HCT116 (cell line): ENCODE measurements at regions of chr15 and their contacts with region 1.

Region 1: GRCh38 chr15:45714590-45715488 is 80.0 kb downstream of the SQOR start:
- DNase-seq: peak; percentile 35
- ATAC-seq: peak; percentile 92
- H3K4me3 ChIP-seq: no peak overlapping the region
- H3K27ac ChIP-seq: no peak overlapping the region
- H3K4me1 ChIP-seq: no peaks in the 10 kb centered on the region
- H3K27me3 ChIP-seq: peaks cover 6% of the 10 kb centered on the region; the same call in 1 of the 2 replicates
- CTCF ChIP-seq: peak; percentile 53 to 98 (median 81); a peak in 5 of 6 replicates
- POLR2A ChIP-seq: no peak
- RAD21 ChIP-seq: peak; percentile 62

Region 2: GRCh38 chr15:45402162-45402954 is 312.5 kb before region 1 on chr15:
- CTCF ChIA-PET with region 1: no interaction called
- POLR2A ChIA-PET with region 1: no interaction called
- RAD21 ChIA-PET with region 1: no interaction called
- intact Hi-C with region 1: no loop called
- DNase-seq: peak; percentile 99
- ATAC-seq: peak; percentile 92
- H3K4me3 ChIP-seq: peak overlapping the region; percentile 78 to 86
- H3K27ac ChIP-seq: peak overlapping the region; percentile 97
- H3K4me1 ChIP-seq: peaks cover 5 to 15% of the 10 kb centered on the region in 2 experiments; a peak in 3 of 4 replicates
- H3K27me3 ChIP-seq: no peaks in the 10 kb centered on the region
- CTCF ChIP-seq: no peak
- POLR2A ChIP-seq: peak; percentile 97
- RAD21 ChIP-seq: no peak

Region 3: GRCh38 chr15:45641374-45641781 is 73.5 kb before region 1 on chr15:
- CTCF ChIA-PET with region 1: no interaction called
- POLR2A ChIA-PET with region 1: no interaction called
- RAD21 ChIA-PET with region 1: no interaction called
- intact Hi-C with region 1: no loop called
- DNase-seq: no peak
- ATAC-seq: peak; percentile 64; the same call in 1 of the 2 replicates
- H3K4me3 ChIP-seq: no peak overlapping the region
- H3K27ac ChIP-seq: no peak overlapping the region
- H3K4me1 ChIP-seq: peaks cover 0 to 26% of the 10 kb centered on the region in 2 experiments; a peak in 2 of 4 replicates
- H3K27me3 ChIP-seq: no peaks in the 10 kb centered on the region
- CTCF ChIP-seq: no peak
- POLR2A ChIP-seq: no peak
- RAD21 ChIP-seq: no peak

Region 4: DNA sequence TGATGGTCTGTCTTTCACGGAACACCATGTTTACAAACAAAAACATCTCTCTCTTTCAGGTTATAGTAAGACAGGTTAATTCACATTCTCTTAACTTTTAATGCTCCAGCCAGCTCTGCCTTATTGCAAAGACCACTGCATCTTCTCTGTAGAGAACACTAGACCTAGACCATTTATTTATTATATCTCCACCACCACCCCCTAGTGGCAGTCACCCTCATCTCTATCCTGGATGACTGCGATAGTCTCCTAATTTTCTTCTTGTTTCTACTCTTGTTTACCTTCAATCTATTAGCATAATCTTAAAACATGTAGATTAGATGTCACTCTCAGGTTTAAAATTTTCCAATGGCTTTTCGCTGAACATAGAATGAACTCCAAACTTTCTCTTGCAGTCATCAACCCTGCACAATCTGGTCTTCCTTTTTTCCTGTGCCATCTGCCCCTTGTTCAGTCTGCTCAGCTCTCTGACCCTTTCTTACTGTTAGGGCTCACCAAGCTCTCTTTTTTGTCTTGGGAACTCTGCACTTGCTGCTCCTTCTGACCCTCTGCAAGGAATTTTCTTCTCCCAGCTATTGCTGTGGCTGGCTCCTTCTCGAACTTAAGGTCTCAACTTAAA is 75.6 kb after region 1 on chr15:
- CTCF ChIA-PET with region 1: interaction called, 16 read pairs
- POLR2A ChIA-PET with region 1: no interaction called
- RAD21 ChIA-PET with region 1: interaction called in 1 of 2 experiments, 4 read pairs
- intact Hi-C with region 1: loop called (anchors 2 kb)
- DNase-seq: peak; percentile 6
- ATAC-seq: peak; percentile 84
- H3K4me3 ChIP-seq: no peak overlapping the region
- H3K27ac ChIP-seq: no peak overlapping the region
- H3K4me1 ChIP-seq: no peaks in the 10 kb centered on the region
- H3K27me3 ChIP-seq: no peaks in the 10 kb centered on the region
- CTCF ChIP-seq: peak; percentile 30 to 72 (median 62); a peak in 5 of 6 replicates
- POLR2A ChIP-seq: no peak
- RAD21 ChIP-seq: peak; percentile 31; the same call in 1 of the 2 replicates

Region 5: DNA sequence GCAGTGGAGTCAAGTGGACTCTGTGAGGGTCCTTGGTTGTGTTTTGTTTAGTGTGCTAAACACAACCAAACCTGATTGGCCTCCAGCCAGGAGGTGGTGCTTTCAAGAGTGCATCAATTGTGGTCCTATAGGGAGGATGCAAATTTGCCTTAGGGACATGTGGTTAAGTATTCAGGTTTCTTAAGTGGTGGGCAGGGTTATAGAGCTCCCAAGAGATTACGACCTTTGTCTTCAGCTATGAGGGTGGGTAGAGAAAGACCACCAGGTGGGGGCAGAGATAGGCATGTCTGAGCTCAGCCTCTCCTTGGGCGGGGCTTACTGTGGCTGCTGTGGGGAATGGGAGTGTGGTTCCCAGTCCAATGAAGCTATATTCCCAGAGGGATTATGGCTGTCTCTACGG is 106.6 kb after region 1 on chr15:
- CTCF ChIA-PET with region 1: no interaction called
- POLR2A ChIA-PET with region 1: no interaction called
- RAD21 ChIA-PET with region 1: no interaction called
- intact Hi-C with region 1: no loop called
- DNase-seq: no peak
- ATAC-seq: no peak
- H3K4me3 ChIP-seq: no peak overlapping the region
- H3K27ac ChIP-seq: no peak overlapping the region
- H3K4me1 ChIP-seq: no peaks in the 10 kb centered on the region
- H3K27me3 ChIP-seq: no peaks in the 10 kb centered on the region
- CTCF ChIP-seq: no peak
- POLR2A ChIP-seq: no peak
- RAD21 ChIP-seq: no peak